ENCODE measurements at regions of chr3 and their contacts with region 1.

Region 1: GRCh38 chr3:69207031-69207430 is 84.6 kb upstream of the LMOD3 start:
- DNase-seq: no peak
- H3K4me3 Mint-ChIP-seq: no peak overlapping the region
- H3K27ac Mint-ChIP-seq: peak overlapping the region; percentile 97
- H3K4me1 Mint-ChIP-seq: peaks cover 81% of the 10 kb centered on the region
- H3K27me3 Mint-ChIP-seq: no peaks in the 10 kb centered on the region

Region 2: GRCh38 chr3:69044608-69045007 is 162.4 kb before region 1 on chr3:
- CTCF ChIA-PET with region 1: no interaction called
- POLR2A ChIA-PET with region 1: no interaction called
- DNase-seq: no peak
- H3K4me3 Mint-ChIP-seq: no peak overlapping the region
- H3K27ac Mint-ChIP-seq: no peak overlapping the region
- H3K4me1 Mint-ChIP-seq: peaks cover 32% of the 10 kb centered on the region
- H3K27me3 Mint-ChIP-seq: no peaks in the 10 kb centered on the region

Region 3: GRCh38 chr3:69226076-69226475 is 19.0 kb after region 1 on chr3:
- CTCF ChIA-PET with region 1: no interaction called
- POLR2A ChIA-PET with region 1: no interaction called
- DNase-seq: no peak
- H3K4me3 Mint-ChIP-seq: no peak overlapping the region
- H3K27ac Mint-ChIP-seq: no peak overlapping the region
- H3K4me1 Mint-ChIP-seq: peaks cover 3% of the 10 kb centered on the region
- H3K27me3 Mint-ChIP-seq: no peaks in the 10 kb centered on the region

Region 4: GRCh38 chr3:69236812-69237707 is 30.0 kb after region 1 on chr3:
- CTCF ChIA-PET with region 1: interaction called, 7 read pairs
- POLR2A ChIA-PET with region 1: interaction called, 10 read pairs
- DNase-seq: no peak
- H3K4me3 Mint-ChIP-seq: peak overlapping the region; percentile 70
- H3K27ac Mint-ChIP-seq: peak overlapping the region; percentile 48
- H3K4me1 Mint-ChIP-seq: peaks cover 30% of the 10 kb centered on the region
- H3K27me3 Mint-ChIP-seq: no peaks in the 10 kb centered on the region

Region 5: GRCh38 chr3:69250014-69250413 is 43.0 kb after region 1 on chr3:
- CTCF ChIA-PET with region 1: interaction called, 4 read pairs
- POLR2A ChIA-PET with region 1: interaction called, 11 read pairs
- DNase-seq: peak; percentile 72
- H3K4me3 Mint-ChIP-seq: peak overlapping the region; percentile 71
- H3K27ac Mint-ChIP-seq: peak overlapping the region; percentile 44
- H3K4me1 Mint-ChIP-seq: peaks cover 10% of the 10 kb centered on the region
- H3K27me3 Mint-ChIP-seq: peaks cover 7% of the 10 kb centered on the region

Region 6: GRCh38 chr3:69260216-69260787 is 53.3 kb after region 1 on chr3:
- CTCF ChIA-PET with region 1: no interaction called
- POLR2A ChIA-PET with region 1: no interaction called
- DNase-seq: no peak
- H3K4me3 Mint-ChIP-seq: no peak overlapping the region
- H3K27ac Mint-ChIP-seq: no peak overlapping the region
- H3K4me1 Mint-ChIP-seq: no peaks in the 10 kb centered on the region
- H3K27me3 Mint-ChIP-seq: peaks cover 3% of the 10 kb centered on the region